CD4-positive, alpha-beta T cell (primary cell): ENCODE measurements at regions of chr11 and their contacts with region 1.

Region 1: DNA sequence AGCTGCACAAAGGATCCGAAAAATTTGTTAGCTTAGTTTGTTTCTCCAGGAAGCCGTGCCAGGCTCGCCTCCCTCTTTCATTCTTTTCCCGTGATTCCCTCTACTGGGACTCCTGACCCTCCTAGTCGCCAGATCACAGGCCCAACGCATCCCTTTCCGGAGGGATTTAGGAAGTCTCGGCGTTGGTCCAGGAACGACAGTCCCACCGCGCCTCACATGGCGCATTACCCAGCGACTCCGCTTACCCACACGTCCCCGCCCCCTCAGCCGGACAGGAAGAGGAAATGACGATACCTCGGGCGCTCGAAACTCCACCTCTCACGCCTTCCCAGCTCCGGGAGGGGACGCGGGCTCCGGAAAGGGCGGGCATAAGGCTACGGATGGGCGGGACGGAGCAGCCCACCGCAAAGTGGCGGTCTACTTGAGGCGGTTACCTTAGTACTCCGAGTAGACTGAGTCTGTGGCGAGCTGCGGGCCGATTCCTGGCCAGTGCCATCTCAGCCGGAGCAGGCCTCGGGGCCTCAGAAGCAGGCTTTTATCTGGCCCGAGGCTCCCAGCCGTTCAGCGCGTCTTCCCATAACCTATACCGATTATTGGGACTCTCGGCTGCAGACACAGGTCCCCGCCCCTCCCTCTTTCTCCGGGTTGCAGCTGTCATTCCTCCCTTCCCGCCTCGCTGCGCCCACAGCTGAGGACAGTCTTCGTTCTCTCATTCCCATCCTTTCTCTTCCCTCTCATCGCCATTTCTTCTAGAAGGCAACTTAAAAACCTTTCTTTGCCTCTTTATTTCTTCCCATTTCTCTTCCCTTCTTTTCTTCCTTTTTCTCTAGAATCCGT is at the start of gene CCDC15:
- DNase-seq: peak; percentile 89 to 98 (median 94)
- ATAC-seq: peak; percentile 95
- H3K4me3 ChIP-seq: peak within 1 kb of the TSS; percentile 87
- H3K4me3 Mint-ChIP-seq: no peak within 1 kb of the TSS
- H3K27ac ChIP-seq: peak within 1 kb of the TSS; percentile 74 to 90
- H3K27ac Mint-ChIP-seq: no peak within 1 kb of the TSS
- H3K4me1 ChIP-seq: peaks cover 40% of the 10 kb centered on the region
- H3K4me1 Mint-ChIP-seq: no peaks in the 10 kb centered on the region
- H3K27me3 ChIP-seq: no peaks in the 10 kb centered on the region
- H3K27me3 Mint-ChIP-seq: no peaks in the 10 kb centered on the region
- CTCF ChIP-seq: no peak
- total RNA-seq, gene CCDC15: 0.89 to 1.1 TPM

Region 2: DNA sequence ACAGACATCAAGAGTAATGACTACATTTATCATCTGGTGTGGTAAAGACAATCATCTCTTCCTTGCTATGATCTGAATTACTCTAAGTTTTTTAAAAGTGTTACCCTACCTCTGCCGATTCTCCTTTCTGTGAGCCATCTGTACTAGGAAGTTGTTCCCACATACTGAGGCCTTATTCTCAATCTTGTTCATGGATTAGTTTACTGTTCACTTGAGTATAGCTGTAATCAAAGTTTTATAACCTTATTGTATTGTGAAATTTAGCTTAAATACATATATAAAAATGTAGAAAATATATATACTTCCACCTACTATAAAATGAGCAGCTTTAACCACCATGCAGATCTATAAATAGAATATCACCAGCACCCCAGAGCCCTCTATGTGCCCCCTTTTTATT is 631.6 kb before region 1 on chr11:
- CTCF ChIA-PET with region 1: no interaction called
- POLR2A ChIA-PET with region 1: no interaction called
- intact Hi-C with region 1: no loop called
- DNase-seq: no peak
- ATAC-seq: no peak
- H3K4me3 ChIP-seq: no peak overlapping the region
- H3K4me3 Mint-ChIP-seq: no peak overlapping the region
- H3K27ac ChIP-seq: no peak overlapping the region
- H3K27ac Mint-ChIP-seq: no peak overlapping the region
- H3K4me1 ChIP-seq: no peaks in the 10 kb centered on the region
- H3K4me1 Mint-ChIP-seq: no peaks in the 10 kb centered on the region
- H3K27me3 ChIP-seq: peaks cover 0 to 4% of the 10 kb centered on the region in 2 experiments
- H3K27me3 Mint-ChIP-seq: peaks cover 32% of the 10 kb centered on the region
- CTCF ChIP-seq: no peak

Region 3: DNA sequence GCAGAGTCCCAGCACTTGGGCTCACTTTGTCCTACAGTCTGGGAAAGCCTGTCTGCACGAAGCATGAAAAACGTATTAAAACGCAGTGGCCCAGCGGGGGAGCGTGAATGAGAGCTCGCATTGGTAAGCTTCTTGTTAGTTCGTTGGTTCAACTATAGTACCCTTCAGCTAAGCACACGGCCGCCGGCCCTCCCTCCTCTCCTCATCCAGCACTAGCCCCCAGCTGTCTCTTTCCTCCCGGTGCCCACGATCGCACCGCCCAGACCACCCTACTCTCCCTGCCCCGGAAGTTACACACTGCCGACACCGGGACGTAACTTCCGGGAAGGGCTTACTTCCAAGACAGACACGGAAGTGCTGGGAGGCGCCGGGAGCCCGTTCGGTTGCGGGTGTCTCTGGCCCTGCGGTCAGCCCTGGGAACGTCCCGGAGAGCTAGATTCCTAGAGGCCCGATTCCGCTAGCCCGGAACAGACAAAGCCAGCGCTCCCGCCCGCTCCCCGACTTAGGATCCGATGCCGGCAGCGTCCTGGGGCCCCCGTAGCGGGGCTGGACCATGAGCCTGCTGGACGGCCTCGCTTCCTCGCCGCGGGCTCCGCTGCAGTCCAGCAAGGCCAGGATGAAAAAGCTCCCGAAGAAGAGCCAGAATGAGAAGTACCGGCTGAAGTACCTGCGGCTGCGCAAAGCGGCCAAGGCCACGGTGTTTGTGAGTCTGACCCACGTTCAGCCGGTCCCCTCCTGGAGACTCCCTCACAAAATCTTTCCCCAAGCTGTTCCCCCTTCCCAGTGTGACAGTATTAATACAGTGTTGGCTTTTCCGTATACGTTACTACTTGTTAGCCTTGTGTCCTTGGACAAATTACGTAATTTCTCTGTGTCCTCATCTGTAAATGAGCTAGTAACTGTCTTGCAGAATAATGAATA is 331.2 kb before region 1 on chr11 and contains the start of gene TBRG1:
- CTCF ChIA-PET with region 1: no interaction called
- POLR2A ChIA-PET with region 1: interaction called, 3 read pairs
- intact Hi-C with region 1: loop called (anchors 2 to 5 kb)
- DNase-seq: peak; percentile 63 to 94 (median 77)
- ATAC-seq: peak; percentile 95
- H3K4me3 ChIP-seq: peak within 1 kb of the TSS; percentile 83
- H3K4me3 Mint-ChIP-seq: peak within 1 kb of the TSS; percentile 97
- H3K27ac ChIP-seq: peak within 1 kb of the TSS; percentile 88 to 90
- H3K27ac Mint-ChIP-seq: peak within 1 kb of the TSS; percentile 96
- H3K4me1 ChIP-seq: peaks cover 17% of the 10 kb centered on the region
- H3K4me1 Mint-ChIP-seq: peaks cover 49% of the 10 kb centered on the region
- H3K27me3 ChIP-seq: no peaks in the 10 kb centered on the region
- H3K27me3 Mint-ChIP-seq: peaks cover 15% of the 10 kb centered on the region
- CTCF ChIP-seq: no peak
- total RNA-seq, gene TBRG1: 62.4 to 65.9 TPM

Region 4: DNA sequence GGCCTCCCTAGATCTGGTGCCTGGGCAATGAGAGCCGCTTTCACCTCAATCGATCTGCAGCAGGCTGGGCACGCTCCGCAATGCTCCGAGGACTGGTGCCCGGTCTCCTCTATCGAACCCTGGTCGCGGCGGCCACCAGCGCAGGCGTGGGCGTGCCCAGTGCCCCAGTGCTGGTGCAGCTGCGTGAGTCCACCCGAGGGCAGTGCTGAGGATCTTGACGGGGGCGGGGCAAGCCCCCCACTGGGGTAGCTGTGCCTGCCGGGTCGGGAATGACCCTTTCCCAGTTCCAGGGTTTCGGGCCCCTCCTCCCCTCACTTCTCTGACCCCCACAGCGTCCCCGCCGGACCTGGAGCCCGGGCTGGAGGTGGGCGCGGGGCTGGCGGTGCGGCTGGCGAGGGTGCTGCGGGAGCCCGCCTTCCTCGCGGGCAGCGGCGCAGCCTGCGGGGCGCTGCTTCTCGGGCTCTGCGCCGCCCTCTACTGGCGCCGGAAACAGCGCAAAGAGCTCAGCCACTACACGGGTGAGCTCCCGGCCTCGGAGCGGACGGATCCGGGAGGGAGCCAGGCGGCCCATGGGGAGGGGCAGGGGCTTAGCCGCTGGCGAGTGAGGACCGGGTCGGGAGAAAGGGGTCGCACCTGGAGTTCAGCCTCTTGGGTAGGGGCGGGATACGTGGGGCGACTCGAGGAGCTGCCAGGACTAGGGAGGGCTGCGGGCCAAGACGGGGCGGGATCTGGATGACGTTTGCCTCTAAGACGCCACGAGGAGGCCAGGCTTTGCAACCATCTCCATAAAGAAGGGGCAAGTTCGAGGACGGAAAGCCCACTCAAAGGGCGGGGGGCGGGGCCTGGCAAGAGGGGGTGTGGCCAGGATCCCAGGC is 77.8 kb before region 1 on chr11:
- CTCF ChIA-PET with region 1: interaction called, 11 read pairs
- POLR2A ChIA-PET with region 1: interaction called, 30 read pairs
- intact Hi-C with region 1: loop called (anchors 2 kb)
- DNase-seq: peak; percentile 54 to 89 (median 71)
- ATAC-seq: peak; percentile 96
- H3K4me3 ChIP-seq: peak overlapping the region; percentile 83
- H3K4me3 Mint-ChIP-seq: peak overlapping the region; percentile 94
- H3K27ac ChIP-seq: peak overlapping the region; percentile 62 to 76
- H3K27ac Mint-ChIP-seq: peak overlapping the region; percentile 87
- H3K4me1 ChIP-seq: peaks cover 23% of the 10 kb centered on the region
- H3K4me1 Mint-ChIP-seq: peaks cover 25% of the 10 kb centered on the region
- H3K27me3 ChIP-seq: peaks cover 10 to 40% of the 10 kb centered on the region in 2 experiments
- H3K27me3 Mint-ChIP-seq: peaks cover 42% of the 10 kb centered on the region
- CTCF ChIP-seq: peak; percentile 80

Region 5: DNA sequence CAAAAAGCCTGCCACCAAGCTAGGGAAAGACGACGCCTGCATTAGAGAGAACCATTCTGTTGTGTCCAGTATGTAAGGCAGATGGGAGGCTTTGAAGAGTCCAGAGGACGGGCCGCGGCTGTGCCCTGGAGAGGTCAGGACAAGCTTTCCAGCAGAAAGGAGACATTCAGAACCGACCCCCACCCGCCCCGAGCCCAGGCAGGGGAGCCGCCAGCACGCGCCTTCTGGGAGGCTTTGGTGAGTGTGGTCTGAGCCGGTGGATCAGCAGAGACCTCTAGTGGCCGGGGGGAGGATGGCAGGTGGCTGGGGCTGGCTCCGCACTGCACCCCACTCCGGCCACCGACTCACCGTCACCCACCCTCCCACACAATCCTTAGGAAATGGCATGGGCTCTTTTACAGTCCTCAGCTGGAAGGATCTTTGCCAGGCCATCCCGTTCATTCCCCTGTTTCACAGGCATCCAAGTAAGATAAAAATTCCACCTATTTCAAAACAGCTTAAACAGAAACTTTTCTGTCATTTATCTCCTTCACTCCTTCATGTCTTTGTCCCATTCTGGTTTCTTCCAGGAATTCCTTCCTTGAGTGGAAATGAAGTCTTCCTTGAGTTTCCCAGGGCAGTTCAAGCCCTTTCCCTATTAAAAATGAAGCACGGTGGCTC is 450.9 kb after region 1 on chr11:
- CTCF ChIA-PET with region 1: no interaction called
- POLR2A ChIA-PET with region 1: no interaction called
- intact Hi-C with region 1: loop called in 1 of 2 experiments (anchors 10 kb)
- DNase-seq: peak; percentile 28 to 75 (median 56)
- ATAC-seq: peak; percentile 88
- H3K4me3 ChIP-seq: no peak overlapping the region
- H3K4me3 Mint-ChIP-seq: no peak overlapping the region
- H3K27ac ChIP-seq: no peak overlapping the region
- H3K27ac Mint-ChIP-seq: no peak overlapping the region
- H3K4me1 ChIP-seq: peaks cover 5% of the 10 kb centered on the region
- H3K4me1 Mint-ChIP-seq: peaks cover 7% of the 10 kb centered on the region
- H3K27me3 ChIP-seq: peaks cover 17 to 27% of the 10 kb centered on the region in 2 experiments
- H3K27me3 Mint-ChIP-seq: peaks cover 78% of the 10 kb centered on the region
- CTCF ChIP-seq: peak; percentile 83

Region 6: DNA sequence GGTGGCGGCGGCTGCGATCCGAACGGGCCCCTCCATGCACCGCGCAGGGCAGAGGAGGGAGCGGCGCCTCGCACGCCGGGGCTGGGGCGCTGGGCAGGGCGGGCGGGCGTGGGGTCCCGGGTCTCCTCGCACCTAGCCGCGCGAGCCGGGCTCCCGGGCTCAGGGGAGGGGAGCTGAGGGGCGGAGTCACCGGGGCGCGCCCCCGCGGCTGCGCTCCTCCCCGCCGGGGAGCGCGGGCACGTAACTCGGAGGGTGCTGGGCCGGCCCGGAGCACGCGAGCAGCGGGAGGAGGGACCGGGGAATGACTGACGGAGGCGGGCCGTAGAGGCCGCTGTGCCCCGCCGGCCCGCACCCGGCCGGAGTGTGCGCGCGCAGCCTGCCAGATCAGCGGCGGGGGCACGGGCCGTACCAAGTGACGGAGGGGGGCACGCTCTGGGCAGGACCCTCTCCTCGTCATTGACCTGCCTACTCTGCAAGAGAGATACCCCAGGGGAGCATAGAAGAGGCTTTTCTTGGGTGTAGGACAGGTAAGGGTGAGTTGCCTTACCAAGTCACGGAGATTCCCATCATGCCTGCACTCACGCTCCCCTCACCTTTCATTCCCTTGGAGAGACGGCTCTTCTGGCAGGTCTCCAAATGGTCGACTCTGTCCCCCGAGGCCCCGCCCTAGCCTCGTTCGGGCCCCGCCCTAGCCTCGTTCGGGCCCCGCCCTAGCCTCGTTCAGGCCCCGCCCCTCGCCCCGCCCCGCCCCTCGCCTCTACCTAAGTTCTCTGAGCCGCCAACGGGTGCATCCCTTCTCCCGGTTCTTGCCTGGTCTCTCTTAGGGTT is 1108.9 kb after region 1 on chr11 and contains the start of gene CDON:
- CTCF ChIA-PET with region 1: no interaction called
- POLR2A ChIA-PET with region 1: no interaction called
- intact Hi-C with region 1: loop called in 1 of 2 experiments (anchors 10 kb)
- DNase-seq: peak; percentile 84 to 97 (median 90)
- ATAC-seq: peak; percentile 85
- H3K4me3 ChIP-seq: peak within 1 kb of the TSS; percentile 55
- H3K4me3 Mint-ChIP-seq: peak within 1 kb of the TSS; percentile 93
- H3K27ac ChIP-seq: peak within 1 kb of the TSS; percentile 55 to 84
- H3K27ac Mint-ChIP-seq: peak within 1 kb of the TSS; percentile 85
- H3K4me1 ChIP-seq: peaks cover 13% of the 10 kb centered on the region
- H3K4me1 Mint-ChIP-seq: peaks cover 16% of the 10 kb centered on the region
- H3K27me3 ChIP-seq: peaks cover 0 to 6% of the 10 kb centered on the region in 2 experiments
- H3K27me3 Mint-ChIP-seq: peaks cover 13% of the 10 kb centered on the region
- CTCF ChIP-seq: no peak
- total RNA-seq, gene CDON: 1.9 to 2.7 TPM

Region 7: GRCh38 chr11:126282736-126283591 is 1329.0 kb after region 1 on chr11 and contains the start of gene TIRAP:
- CTCF ChIA-PET with region 1: no interaction called
- POLR2A ChIA-PET with region 1: no interaction called
- intact Hi-C with region 1: loop called in 1 of 2 experiments (anchors 5 kb)
- DNase-seq: peak; percentile 47 to 84 (median 58)
- ATAC-seq: peak; percentile 54
- H3K4me3 ChIP-seq: peak within 1 kb of the TSS; percentile 89
- H3K4me3 Mint-ChIP-seq: peak within 1 kb of the TSS; percentile 95
- H3K27ac ChIP-seq: peak within 1 kb of the TSS; percentile 80 to 89
- H3K27ac Mint-ChIP-seq: peak within 1 kb of the TSS; percentile 99
- H3K4me1 ChIP-seq: peaks cover 56% of the 10 kb centered on the region
- H3K4me1 Mint-ChIP-seq: peaks cover 59% of the 10 kb centered on the region
- H3K27me3 ChIP-seq: no peaks in the 10 kb centered on the region
- H3K27me3 Mint-ChIP-seq: no peaks in the 10 kb centered on the region
- CTCF ChIP-seq: no peak
- total RNA-seq, gene TIRAP: 7.7 to 7.9 TPM